Aorta (tissue), 5 donors: ENCODE measurements at regions of chr2 and their contacts with region 1.

Region 1: GRCh38 chr2:158753641-158754611 is 41.2 kb upstream of the DAPL1 start:
- DNase-seq: no peak
- ATAC-seq: peak; percentile 88
- H3K4me3 ChIP-seq: peak overlapping the region in 1 of 2 donors; percentile 46
- H3K27ac ChIP-seq: no peak overlapping the region
- H3K4me1 ChIP-seq: no peaks in the 10 kb centered on the region
- H3K27me3 ChIP-seq: no peaks in the 10 kb centered on the region

Region 2: DNA sequence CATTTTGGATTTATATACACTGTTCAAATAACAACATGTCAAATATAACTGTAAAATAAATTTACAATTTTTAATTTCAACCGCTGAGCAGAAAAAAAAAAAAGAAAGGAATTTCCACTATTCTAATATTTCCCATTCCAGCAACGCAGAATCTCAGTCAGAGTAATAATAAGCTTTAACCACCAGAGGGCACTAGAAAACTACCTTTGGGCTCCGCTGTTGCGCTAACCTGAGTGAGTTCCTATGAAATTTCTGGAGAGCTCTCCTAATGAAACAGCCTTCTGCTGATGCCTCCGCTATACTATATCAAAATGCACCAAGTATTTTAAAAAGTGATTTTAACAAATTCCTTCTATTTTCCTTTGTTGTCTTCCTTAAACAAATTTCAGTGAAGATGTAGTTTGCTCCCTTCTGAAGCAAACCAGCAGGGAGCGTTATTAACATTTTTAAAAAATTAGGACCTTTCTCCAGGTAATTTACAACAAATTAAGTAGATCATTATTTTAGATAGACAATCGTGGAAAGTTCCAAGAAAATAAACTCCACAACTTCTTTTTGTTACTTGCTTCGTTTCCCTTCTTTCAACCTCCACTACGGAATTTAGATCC is 1451.3 kb before region 1 on chr2:
- intact Hi-C with region 1: loop called in 1 of 2 experiments (anchors 10 kb)
- DNase-seq: no peak
- ATAC-seq: peak; percentile 84
- H3K4me3 ChIP-seq: no peak overlapping the region
- H3K27ac ChIP-seq: no peak overlapping the region
- H3K4me1 ChIP-seq: no peaks in the 10 kb centered on the region
- H3K27me3 ChIP-seq: no peaks in the 10 kb centered on the region

Region 3: DNA sequence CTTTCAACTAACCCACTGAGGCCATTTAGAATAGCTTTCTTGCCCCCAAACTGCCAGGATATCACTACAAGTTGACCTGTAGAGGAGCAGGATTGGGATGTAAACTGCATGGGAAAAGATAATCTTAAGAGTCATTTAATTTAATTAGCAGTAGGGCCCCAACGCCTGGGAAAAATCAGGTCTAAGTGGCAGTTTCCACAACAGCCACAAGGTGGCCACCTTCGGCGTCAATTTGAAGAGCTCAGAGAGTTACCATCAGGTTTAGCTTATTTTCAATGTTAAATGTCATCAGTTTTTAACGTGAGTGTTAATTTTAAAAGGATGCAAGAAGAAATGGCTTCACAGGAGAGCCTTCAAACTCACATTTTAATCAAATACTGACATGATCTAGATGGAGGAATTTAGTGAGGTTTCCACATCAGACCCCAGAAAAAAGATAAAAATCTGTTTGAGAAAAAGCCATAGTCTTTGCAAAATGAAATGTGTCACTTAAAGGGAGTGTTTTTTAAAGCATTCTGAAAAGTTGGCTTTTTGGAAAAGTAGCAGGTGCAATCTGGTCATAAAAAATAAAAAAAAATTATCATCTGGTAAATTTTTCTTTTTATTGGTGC is 729.5 kb before region 1 on chr2:
- intact Hi-C with region 1: loop called (anchors 5 kb)
- DNase-seq: no peak
- ATAC-seq: no peak
- H3K4me3 ChIP-seq: no peak overlapping the region
- H3K27ac ChIP-seq: no peak overlapping the region
- H3K4me1 ChIP-seq: no peaks in the 10 kb centered on the region
- H3K27me3 ChIP-seq: no peaks in the 10 kb centered on the region

Region 4: GRCh38 chr2:158456309-158457066 is 297.4 kb before region 1 on chr2 and contains the starts of genes CCDC148 and PKP4:
- intact Hi-C with region 1: loop called (anchors 10 kb)
- DNase-seq: peak; percentile 92 to 94
- ATAC-seq: peak; percentile 97
- H3K4me3 ChIP-seq: peak within 1 kb of the TSS; percentile 84 to 86
- H3K27ac ChIP-seq: peak within 1 kb of the TSS; percentile 46 to 69
- H3K4me1 ChIP-seq: no peaks in the 10 kb centered on the region
- H3K27me3 ChIP-seq: no peaks in the 10 kb centered on the region
- total RNA-seq, gene CCDC148: 0.52 to 1.6 TPM
- total RNA-seq, gene PKP4: 53.3 to 128 TPM

Region 5: GRCh38 chr2:158879229-158879916 is 125.4 kb after region 1 on chr2:
- intact Hi-C with region 1: no loop called
- DNase-seq: no peak
- ATAC-seq: no peak
- H3K4me3 ChIP-seq: no peak overlapping the region
- H3K27ac ChIP-seq: no peak overlapping the region
- H3K4me1 ChIP-seq: no peaks in the 10 kb centered on the region
- H3K27me3 ChIP-seq: no peaks in the 10 kb centered on the region